Heart right ventricle (tissue), 16 donors: ENCODE measurements at regions of chr18 and their contacts with region 1.

Region 1: DNA sequence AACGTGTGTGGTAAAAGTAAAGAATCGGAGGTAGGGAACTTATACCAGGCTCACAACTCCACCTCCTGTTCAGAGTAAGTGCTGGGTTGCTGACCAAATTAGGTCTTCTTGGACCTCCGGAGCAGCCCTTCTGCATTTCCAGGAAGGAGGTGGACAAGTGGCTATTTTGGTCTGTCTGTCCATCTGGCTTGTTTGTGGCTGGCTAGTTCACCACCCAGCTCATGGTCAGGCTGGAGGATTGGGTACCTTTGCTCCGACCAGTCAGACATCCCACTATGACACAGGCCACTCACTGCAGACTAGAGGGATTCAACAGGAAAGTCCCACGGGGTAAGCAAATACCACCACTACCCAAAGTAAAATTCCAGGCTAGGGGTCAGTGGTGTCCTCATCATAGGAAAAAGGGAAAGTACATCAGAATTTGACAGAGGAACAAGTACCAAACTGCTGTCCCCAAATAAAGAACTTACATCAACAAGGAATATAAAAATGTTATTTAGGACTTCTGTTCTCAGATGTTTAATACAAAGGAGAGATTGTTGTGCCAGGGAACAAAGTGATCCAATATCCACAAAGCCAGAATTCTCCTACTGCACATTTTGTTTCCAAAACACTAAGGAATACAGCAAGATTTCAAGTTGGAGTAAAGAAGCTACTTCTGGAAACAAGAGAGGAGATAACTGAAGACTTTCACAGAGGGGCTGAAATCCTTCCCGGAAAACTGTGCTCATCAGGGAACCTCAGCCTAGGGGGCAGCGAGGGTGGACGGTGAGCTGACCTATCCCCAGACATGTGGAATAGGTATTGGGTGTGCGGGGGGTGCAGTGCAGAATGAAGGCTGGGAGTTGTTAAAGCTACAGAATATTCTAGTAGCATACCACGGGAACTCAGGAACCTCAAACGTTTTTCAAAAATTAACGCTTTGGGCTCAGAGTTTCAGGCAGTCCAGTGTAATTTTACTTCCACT is 56.9 kb downstream of the BCL2 start:
- DNase-seq: peak in 1 of 2 donors; percentile 41
- ATAC-seq: peak; percentile 50 to 88 (median 81)
- H3K4me3 ChIP-seq: no peak overlapping the region
- H3K27ac ChIP-seq: peak overlapping the region; percentile 3 to 74 (median 47)
- H3K4me1 ChIP-seq: peaks cover 0 to 27% (median 20%) of the 10 kb centered on the region in 9 donors
- H3K27me3 ChIP-seq: no peaks in the 10 kb centered on the region
- CTCF ChIP-seq: peak in 6 of 9 donors; percentile 14 to 55 (median 30)

Region 2: GRCh38 chr18:63073481-63073880 is 189.2 kb before region 1 on chr18:
- intact Hi-C with region 1: no loop called
- DNase-seq: no peak
- ATAC-seq: no peak
- H3K4me3 ChIP-seq: no peak overlapping the region
- H3K27ac ChIP-seq: no peak overlapping the region
- H3K4me1 ChIP-seq: peaks cover 0 to 10% (median 0%) of the 10 kb centered on the region in 9 donors
- H3K27me3 ChIP-seq: no peaks in the 10 kb centered on the region
- CTCF ChIP-seq: peak in 1 of 9 donors; percentile 8

Region 3: GRCh38 chr18:63138436-63139340 is 124.0 kb before region 1 on chr18:
- intact Hi-C with region 1: loop called in 5 of 10 experiments (anchors 5 to 10 kb)
- DNase-seq: peak in 1 of 2 donors; percentile 39
- ATAC-seq: peak in 6 of 8 donors; percentile 32 to 54 (median 46)
- H3K4me3 ChIP-seq: peak overlapping the region in 8 of 10 donors; percentile 4 to 41 (median 30)
- H3K27ac ChIP-seq: peak overlapping the region in 7 of 10 donors; percentile 9 to 77 (median 49)
- H3K4me1 ChIP-seq: peaks cover 0 to 67% (median 58%) of the 10 kb centered on the region in 9 donors
- H3K27me3 ChIP-seq: no peaks in the 10 kb centered on the region
- CTCF ChIP-seq: no peak